Activated naive CD4-positive, alpha-beta T cell treated with anti-CD3 and anti-CD28 coated beads for 36 hours (primary cell): ENCODE measurements at regions of chr7 and their contacts with region 1.

Region 1: GRCh38 chr7:130205084-130205947 is at the start of gene TMEM209:
- DNase-seq: peak; percentile 97
- H3K4me3 Mint-ChIP-seq: peak within 1 kb of the TSS; percentile 98
- H3K27ac Mint-ChIP-seq: peak within 1 kb of the TSS; percentile 98
- H3K4me1 Mint-ChIP-seq: peaks cover 33% of the 10 kb centered on the region
- H3K27me3 Mint-ChIP-seq: no peaks in the 10 kb centered on the region
- total RNA-seq, gene TMEM209: 36.0 to 37.3 TPM

Region 2: GRCh38 chr7:130141161-130141883 is 64.0 kb before region 1 on chr7:
- CTCF ChIA-PET with region 1: interaction called, 3 read pairs
- intact Hi-C with region 1: loop called (anchors 2 kb)
- DNase-seq: peak; percentile 71
- H3K4me3 Mint-ChIP-seq: peak overlapping the region; percentile 59
- H3K27ac Mint-ChIP-seq: peak overlapping the region; percentile 41
- H3K4me1 Mint-ChIP-seq: peaks cover 9% of the 10 kb centered on the region
- H3K27me3 Mint-ChIP-seq: no peaks in the 10 kb centered on the region

Region 3: GRCh38 chr7:130305433-130306042 is 100.2 kb after region 1 on chr7:
- CTCF ChIA-PET with region 1: no interaction called
- intact Hi-C with region 1: no loop called
- DNase-seq: no peak
- H3K4me3 Mint-ChIP-seq: no peak overlapping the region
- H3K27ac Mint-ChIP-seq: no peak overlapping the region
- H3K4me1 Mint-ChIP-seq: no peaks in the 10 kb centered on the region
- H3K27me3 Mint-ChIP-seq: no peaks in the 10 kb centered on the region